ENCODE measurements at regions of chr1 and their contacts with region 1.

Region 1: GRCh38 chr1:26602378-26602959 is 72.9 kb downstream of the RPS6KA1 start:
- DNase-seq: peak in 10 of 14 experiments; percentile 4 to 83 (median 30)
- ATAC-seq: peak; percentile 79
- H3K4me3 ChIP-seq: no peak overlapping the region
- H3K4me3 Mint-ChIP-seq: no peak overlapping the region
- H3K27ac ChIP-seq: no peak overlapping the region
- H3K27ac Mint-ChIP-seq: no peak overlapping the region
- H3K4me1 ChIP-seq: no peaks in the 10 kb centered on the region
- H3K4me1 Mint-ChIP-seq: peaks cover 14% of the 10 kb centered on the region
- H3K27me3 ChIP-seq: no peaks in the 10 kb centered on the region
- H3K27me3 Mint-ChIP-seq: no peaks in the 10 kb centered on the region
- CTCF ChIP-seq: peak; percentile 97

Region 2: GRCh38 chr1:26438041-26438440 is 164.4 kb before region 1 on chr1:
- CTCF ChIA-PET with region 1: no interaction called
- POLR2A ChIA-PET with region 1: no interaction called
- intact Hi-C with region 1: no loop called
- DNase-seq: no peak
- ATAC-seq: no peak
- H3K4me3 ChIP-seq: no peak overlapping the region
- H3K4me3 Mint-ChIP-seq: no peak overlapping the region
- H3K27ac ChIP-seq: no peak overlapping the region
- H3K27ac Mint-ChIP-seq: no peak overlapping the region
- H3K4me1 ChIP-seq: peaks cover 8% of the 10 kb centered on the region
- H3K4me1 Mint-ChIP-seq: peaks cover 11% of the 10 kb centered on the region
- H3K27me3 ChIP-seq: no peaks in the 10 kb centered on the region
- H3K27me3 Mint-ChIP-seq: no peaks in the 10 kb centered on the region
- CTCF ChIP-seq: no peak

Region 3: DNA sequence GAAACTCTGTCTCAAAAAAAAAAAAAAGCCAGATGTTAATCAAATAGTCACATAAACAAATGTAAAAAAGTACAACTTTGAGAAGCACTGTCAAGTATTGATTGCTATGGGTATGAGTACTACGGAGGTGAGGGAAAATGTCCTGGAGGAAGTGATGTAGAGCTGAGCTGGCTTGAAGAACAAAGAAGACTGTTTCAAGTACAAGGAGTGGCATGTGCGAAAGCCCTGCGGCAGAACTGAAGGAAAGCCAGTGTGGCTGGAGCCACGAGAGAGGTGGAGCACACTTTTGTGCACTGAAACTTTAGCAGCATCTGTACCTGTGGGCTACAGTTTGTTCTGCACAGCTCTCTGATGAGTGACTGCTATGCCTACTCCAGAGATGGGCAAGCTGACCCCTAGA is 78.3 kb before region 1 on chr1:
- CTCF ChIA-PET with region 1: no interaction called
- POLR2A ChIA-PET with region 1: no interaction called
- intact Hi-C with region 1: no loop called
- DNase-seq: no peak
- ATAC-seq: no peak
- H3K4me3 ChIP-seq: no peak overlapping the region
- H3K4me3 Mint-ChIP-seq: no peak overlapping the region
- H3K27ac ChIP-seq: no peak overlapping the region
- H3K27ac Mint-ChIP-seq: no peak overlapping the region
- H3K4me1 ChIP-seq: peaks cover 3% of the 10 kb centered on the region
- H3K4me1 Mint-ChIP-seq: peaks cover 3% of the 10 kb centered on the region
- H3K27me3 ChIP-seq: no peaks in the 10 kb centered on the region
- H3K27me3 Mint-ChIP-seq: peaks cover 4% of the 10 kb centered on the region
- CTCF ChIP-seq: no peak

Region 4: GRCh38 chr1:26541816-26542711 is 60.4 kb before region 1 on chr1:
- CTCF ChIA-PET with region 1: interaction called, 4 read pairs
- POLR2A ChIA-PET with region 1: interaction called, 4 read pairs
- intact Hi-C with region 1: loop called in 1 of 2 experiments (anchors 2 kb)
- DNase-seq: peak; percentile 46 to 91 (median 66)
- ATAC-seq: peak; percentile 70
- H3K4me3 ChIP-seq: peak overlapping the region; percentile 40
- H3K4me3 Mint-ChIP-seq: peak overlapping the region; percentile 82
- H3K27ac ChIP-seq: peak overlapping the region; percentile 80 to 83
- H3K27ac Mint-ChIP-seq: peak overlapping the region; percentile 77
- H3K4me1 ChIP-seq: peaks cover 100% of the 10 kb centered on the region
- H3K4me1 Mint-ChIP-seq: peaks cover 90% of the 10 kb centered on the region
- H3K27me3 ChIP-seq: no peaks in the 10 kb centered on the region
- H3K27me3 Mint-ChIP-seq: no peaks in the 10 kb centered on the region
- CTCF ChIP-seq: peak; percentile 74

Region 5: GRCh38 chr1:26677306-26678115 is 75.0 kb after region 1 on chr1:
- CTCF ChIA-PET with region 1: interaction called, 9 read pairs
- POLR2A ChIA-PET with region 1: no interaction called
- intact Hi-C with region 1: loop called (anchors 1 kb)
- DNase-seq: peak in 13 of 14 experiments; percentile 28 to 87 (median 50)
- ATAC-seq: peak; percentile 94
- H3K4me3 ChIP-seq: no peak overlapping the region
- H3K4me3 Mint-ChIP-seq: peak overlapping the region; percentile 42
- H3K27ac ChIP-seq: no peak overlapping the region
- H3K27ac Mint-ChIP-seq: no peak overlapping the region
- H3K4me1 ChIP-seq: peaks cover 13% of the 10 kb centered on the region
- H3K4me1 Mint-ChIP-seq: peaks cover 19% of the 10 kb centered on the region
- H3K27me3 ChIP-seq: no peaks in the 10 kb centered on the region
- H3K27me3 Mint-ChIP-seq: no peaks in the 10 kb centered on the region
- CTCF ChIP-seq: peak; percentile 53

Region 6: DNA sequence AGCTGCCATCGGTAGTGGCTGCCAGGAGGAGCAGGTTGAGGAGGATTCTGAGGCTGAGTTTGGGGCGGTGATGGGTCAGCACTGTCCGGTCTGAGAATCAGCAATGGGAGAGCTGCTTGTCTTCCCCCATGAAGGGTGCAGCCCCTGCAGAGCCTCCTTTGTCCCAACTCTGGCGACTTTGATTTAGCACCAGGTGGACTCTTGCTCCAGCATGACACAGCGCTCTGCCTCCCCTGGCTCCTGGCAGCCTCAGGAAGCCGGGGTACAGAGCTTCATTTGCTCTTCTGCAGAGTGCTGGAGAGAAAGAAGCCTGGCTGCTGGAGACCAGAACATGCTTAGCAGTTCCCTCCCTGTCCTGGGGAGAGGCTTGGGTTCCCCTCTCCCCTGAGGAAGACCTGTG is 237.3 kb after region 1 on chr1:
- CTCF ChIA-PET with region 1: no interaction called
- POLR2A ChIA-PET with region 1: no interaction called
- intact Hi-C with region 1: no loop called
- DNase-seq: no peak
- ATAC-seq: no peak
- H3K4me3 ChIP-seq: no peak overlapping the region
- H3K4me3 Mint-ChIP-seq: no peak overlapping the region
- H3K27ac ChIP-seq: peak overlapping the region; percentile 7 to 57
- H3K27ac Mint-ChIP-seq: no peak overlapping the region
- H3K4me1 ChIP-seq: peaks cover 30% of the 10 kb centered on the region
- H3K4me1 Mint-ChIP-seq: peaks cover 27% of the 10 kb centered on the region
- H3K27me3 ChIP-seq: no peaks in the 10 kb centered on the region
- H3K27me3 Mint-ChIP-seq: no peaks in the 10 kb centered on the region
- CTCF ChIP-seq: no peak

Measured in CD4-positive, alpha-beta T cell (primary cell).